Ascending aorta (tissue), 2 donors: ENCODE measurements at regions of chr12 and their contacts with region 1.

Region 1: DNA sequence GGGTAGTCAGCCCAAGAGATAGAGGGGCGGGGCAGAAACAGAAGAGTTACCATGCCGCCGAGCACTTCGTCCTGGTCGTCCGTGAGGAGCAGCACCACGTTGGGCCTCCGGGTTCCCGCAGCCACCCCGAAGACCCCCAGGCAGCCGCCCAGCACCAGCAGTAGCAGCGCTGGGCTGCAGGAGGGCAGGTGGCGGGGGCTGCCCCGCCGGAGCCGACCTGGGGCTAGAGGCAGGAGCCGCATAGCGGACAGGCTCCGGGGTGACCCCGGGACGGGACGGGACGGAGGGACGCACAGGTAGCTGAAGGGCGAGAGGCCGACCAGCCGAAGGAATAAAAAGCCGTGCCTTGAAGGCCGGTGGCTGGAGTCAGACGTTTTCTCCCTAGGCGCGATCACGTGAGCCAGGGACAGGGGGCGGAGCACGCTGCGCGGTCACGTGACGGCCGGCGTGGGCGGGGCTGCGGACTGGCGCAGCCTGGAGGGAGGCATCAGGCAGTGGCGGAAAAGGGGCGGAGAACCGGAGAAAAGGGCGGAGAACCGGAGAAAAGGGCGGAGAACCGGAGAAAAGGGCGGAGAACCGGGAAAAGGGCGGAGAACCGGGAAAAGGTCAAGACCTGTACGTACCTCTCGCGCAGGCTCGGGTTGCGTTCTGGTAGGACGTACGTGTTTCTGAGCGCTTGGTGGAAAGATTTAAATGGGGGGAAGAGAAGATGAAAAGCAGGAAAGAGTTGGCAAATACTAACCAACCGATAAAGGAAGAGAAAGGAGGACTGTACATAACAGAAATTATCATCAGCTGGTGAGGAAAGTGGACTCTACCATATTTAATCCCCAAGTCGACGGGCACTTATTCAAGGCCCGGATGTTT is at the start of gene GNS:
- DNase-seq: peak; percentile 93 to 98
- H3K4me3 ChIP-seq: peak within 1 kb of the TSS; percentile 79 to 89
- H3K27ac ChIP-seq: peak within 1 kb of the TSS; percentile 81 to 86
- H3K4me1 ChIP-seq: peaks cover 0 to 3% of the 10 kb centered on the region in 2 donors
- H3K27me3 ChIP-seq: no peaks in the 10 kb centered on the region
- CTCF ChIP-seq: no peak
- total RNA-seq, gene GNS: 105 TPM

Region 2: DNA sequence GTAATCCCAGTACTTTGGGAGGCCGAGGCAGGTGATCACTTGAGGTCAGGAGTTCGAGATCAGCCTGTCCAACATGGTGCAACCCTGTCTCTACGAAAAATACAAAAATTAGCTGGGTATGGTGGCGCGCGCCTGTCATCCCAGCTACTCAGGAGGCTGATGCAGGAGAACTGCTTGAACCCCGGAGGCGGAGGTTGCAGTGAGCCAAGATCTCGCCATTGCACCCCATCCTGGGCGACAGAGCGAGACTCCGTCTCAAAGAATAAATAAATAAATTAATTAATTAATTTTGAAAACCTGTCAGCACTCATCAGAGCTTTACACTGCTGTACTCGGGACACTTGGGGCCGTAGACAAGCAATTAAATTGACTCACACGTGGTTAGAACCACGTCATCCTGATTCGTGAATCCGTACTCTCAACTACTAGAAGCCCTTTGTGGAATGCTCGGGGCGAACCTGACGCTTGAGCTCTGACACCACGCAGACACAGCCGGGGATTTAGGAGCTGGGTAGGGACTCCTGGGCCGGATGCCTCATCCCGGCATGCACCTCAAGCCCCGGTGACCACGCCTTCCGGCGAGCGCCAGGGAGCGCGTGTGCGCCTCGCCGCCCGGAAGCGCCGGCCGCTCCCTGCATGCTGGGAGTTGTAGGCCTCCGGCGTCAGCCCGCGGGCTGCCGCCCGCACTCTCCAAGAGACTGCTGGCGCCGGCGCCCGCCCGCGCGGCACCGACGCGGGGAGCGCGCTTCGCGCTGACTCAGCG is 355.4 kb before region 1 on chr12 and contains the start of gene XPOT:
- intact Hi-C with region 1: loop called (anchors 5 kb)
- DNase-seq: peak; percentile 85 to 97
- H3K4me3 ChIP-seq: peak within 1 kb of the TSS; percentile 76 to 98
- H3K27ac ChIP-seq: peak within 1 kb of the TSS; percentile 97 to 98
- H3K4me1 ChIP-seq: peaks cover 0 to 10% of the 10 kb centered on the region in 2 donors
- H3K27me3 ChIP-seq: no peaks in the 10 kb centered on the region
- CTCF ChIP-seq: no peak
- total RNA-seq, gene XPOT: 24.5 TPM

Region 3: DNA sequence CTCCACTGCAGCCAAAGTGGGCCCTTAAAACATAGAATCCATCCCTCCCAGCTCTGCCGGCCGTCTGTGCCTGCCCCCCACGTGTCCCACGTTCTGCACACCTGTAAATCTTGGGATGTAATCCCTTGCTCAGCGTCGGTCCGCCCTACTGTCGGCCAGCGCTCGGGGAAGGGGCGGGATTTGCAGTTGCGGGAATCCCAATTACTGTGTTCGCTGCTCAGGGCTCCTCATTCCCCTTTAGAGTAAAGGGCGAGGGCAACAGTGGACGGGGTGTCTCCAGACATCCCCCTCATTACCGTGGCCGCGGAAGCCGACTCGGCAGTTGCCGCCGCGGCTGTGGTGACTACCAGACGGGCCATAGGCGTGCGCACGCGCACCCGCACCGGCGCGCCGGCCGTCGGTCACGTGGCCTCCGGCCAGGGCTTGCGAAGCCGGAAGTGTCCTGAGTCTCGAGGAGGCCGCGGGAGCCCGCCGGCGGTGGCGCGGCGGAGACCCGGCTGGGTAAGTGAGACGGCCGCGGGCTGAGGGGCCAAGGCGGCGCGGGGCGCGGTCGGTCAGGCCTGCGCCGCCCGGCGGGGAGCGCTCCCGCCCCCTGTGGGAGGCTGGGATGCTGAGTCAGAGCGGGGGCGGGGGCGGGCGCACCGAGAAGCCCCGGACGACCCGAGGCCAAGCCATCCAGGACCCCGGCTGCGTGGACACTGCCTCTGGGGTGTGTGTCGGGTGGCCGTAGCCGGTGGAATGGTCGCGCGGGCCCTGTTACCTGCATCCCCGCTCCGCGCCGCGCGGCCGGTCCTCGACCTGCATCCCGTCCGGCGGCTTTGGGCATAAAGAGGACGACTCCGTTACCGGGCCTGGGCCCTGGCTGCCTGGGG is 307.3 kb before region 1 on chr12 and contains the start of gene TBK1:
- intact Hi-C with region 1: loop called (anchors 1 kb)
- DNase-seq: peak; percentile 79 to 95
- H3K4me3 ChIP-seq: peak within 1 kb of the TSS; percentile 96 to 97
- H3K27ac ChIP-seq: peak within 1 kb of the TSS; percentile 99
- H3K4me1 ChIP-seq: peaks cover 0 to 7% of the 10 kb centered on the region in 2 donors
- H3K27me3 ChIP-seq: no peaks in the 10 kb centered on the region
- CTCF ChIP-seq: peak in 1 of 3 experiments; percentile 32
- total RNA-seq, gene TBK1: 3.9 TPM

Region 4: DNA sequence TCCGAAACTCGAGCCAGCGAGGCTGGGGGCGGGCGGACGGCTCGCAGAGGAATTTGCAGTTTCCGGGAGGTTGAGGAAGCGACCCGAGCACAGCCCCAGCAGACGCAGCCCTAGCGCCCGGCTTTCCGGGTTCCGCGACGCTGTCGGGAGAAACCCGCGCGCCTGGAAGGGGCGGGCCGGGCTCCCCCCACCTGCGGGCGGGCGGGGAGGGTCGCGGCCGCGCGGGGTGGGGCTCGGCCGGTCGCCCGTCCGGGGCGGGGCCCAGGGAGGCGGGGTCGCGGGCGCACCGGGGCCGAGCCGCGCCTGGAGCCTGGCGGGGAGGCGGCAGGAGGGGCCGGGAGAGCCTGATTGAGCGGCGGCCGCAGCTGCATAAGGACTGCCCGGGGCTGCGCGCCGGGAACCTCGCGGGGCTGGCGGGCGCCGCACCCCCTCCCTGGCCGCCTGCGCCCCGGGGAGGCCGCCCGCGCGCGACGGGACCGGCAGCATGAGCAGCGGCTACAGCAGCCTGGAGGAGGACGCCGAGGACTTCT is 149.1 kb before region 1 on chr12 and contains the start of gene RASSF3:
- intact Hi-C with region 1: loop called (anchors 2 kb)
- DNase-seq: peak in 1 of 2 donors; percentile 88
- H3K4me3 ChIP-seq: peak within 1 kb of the TSS; percentile 91 to 94
- H3K27ac ChIP-seq: peak within 1 kb of the TSS; percentile 93 to 95
- H3K4me1 ChIP-seq: peaks cover 6 to 16% of the 10 kb centered on the region in 2 donors
- H3K27me3 ChIP-seq: no peaks in the 10 kb centered on the region
- CTCF ChIP-seq: peak in 1 of 3 experiments; percentile 4
- total RNA-seq, gene RASSF3: 79.6 TPM

Region 5: GRCh38 chr12:64780531-64781279 is 21.4 kb after region 1 on chr12:
- intact Hi-C with region 1: loop called (anchors 1 kb)
- DNase-seq: peak in 1 of 2 donors; percentile 70
- H3K4me3 ChIP-seq: peak overlapping the region; percentile 66 to 71
- H3K27ac ChIP-seq: peak overlapping the region in 1 of 2 donors; percentile 37
- H3K4me1 ChIP-seq: peaks cover 0 to 9% of the 10 kb centered on the region in 2 donors
- H3K27me3 ChIP-seq: no peaks in the 10 kb centered on the region
- CTCF ChIP-seq: no peak

Region 6: DNA sequence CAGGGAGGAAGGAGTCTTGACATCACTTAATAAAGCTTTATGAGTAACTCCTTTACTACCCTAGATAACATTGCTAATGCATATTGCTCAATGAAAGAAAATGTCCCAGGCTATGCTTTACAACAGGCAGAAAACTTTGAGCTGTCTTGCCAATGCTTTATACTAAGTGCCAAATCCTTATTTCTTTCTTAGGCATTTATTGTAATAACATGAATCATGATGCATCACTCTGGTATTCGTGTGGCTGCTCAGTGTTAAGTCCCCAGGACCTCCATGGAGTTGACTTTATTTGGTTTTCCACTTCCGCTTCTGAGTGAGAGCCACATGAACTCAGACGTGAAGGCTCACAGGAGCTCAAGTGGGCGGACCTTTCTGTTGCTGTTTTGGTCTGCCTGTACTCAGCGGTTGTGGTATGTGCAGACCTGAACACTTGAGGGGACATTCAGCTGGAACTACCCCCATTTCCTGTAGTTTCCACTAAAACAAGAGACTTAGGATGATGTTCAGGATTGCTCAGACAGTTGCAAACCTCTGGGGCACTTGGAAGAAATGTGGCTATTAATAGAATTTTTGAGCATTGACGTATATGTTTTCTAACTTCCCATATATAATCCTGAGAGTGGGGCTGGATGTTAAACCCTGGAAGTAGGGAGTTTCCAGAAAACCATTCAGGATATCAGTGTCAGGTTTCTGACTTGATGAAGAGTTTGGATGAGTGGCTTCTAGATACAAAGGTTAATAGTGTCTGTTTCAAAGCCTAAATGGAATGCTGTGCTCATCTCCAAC is 777.8 kb after region 1 on chr12:
- intact Hi-C with region 1: loop called (anchors 10 kb)
- DNase-seq: peak; percentile 51 to 92
- H3K4me3 ChIP-seq: no peak overlapping the region
- H3K27ac ChIP-seq: peak overlapping the region; percentile 71 to 81
- H3K4me1 ChIP-seq: peaks cover 3 to 10% of the 10 kb centered on the region in 2 donors
- H3K27me3 ChIP-seq: no peaks in the 10 kb centered on the region
- CTCF ChIP-seq: no peak